ENCODE measurements at regions of chr3 and their contacts with region 1.

Region 1: DNA sequence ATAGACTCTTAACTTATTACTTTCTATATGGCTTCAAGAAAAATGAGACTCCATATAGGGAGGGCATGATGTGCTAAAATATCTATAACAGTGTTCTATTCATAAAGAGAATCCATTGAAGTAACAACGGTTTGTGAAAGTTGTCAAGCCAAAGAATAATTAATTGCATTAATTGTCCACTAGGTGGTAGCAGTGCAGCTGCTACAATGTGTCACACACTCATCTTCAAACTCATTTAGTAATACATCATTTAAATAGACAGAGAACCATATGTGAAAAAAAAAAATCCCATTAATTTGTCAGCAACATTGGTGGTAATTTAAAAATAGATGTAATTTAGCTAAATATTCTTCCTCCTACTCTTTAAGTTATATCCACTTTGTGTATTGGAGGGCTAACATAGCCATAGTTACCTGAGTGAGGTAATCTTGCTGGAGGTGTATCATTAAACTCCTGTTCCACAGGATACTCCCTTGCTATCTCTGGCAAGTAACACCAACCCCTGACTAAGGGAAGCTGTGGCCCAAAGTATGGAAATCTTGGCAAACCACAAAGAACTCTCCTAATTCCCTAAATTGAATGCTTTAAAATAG is 3.7 kb upstream of the CPA3 start:
- DNase-seq: no peak
- ATAC-seq: peak; percentile 55
- H3K4me3 Mint-ChIP-seq: no peak overlapping the region
- H3K27ac Mint-ChIP-seq: no peak overlapping the region
- H3K4me1 Mint-ChIP-seq: no peaks in the 10 kb centered on the region
- H3K27me3 Mint-ChIP-seq: peaks cover 12% of the 10 kb centered on the region
- CTCF ChIP-seq: peak; percentile 83

Region 2: GRCh38 chr3:148739720-148740119 is 121.7 kb before region 1 on chr3:
- CTCF ChIA-PET with region 1: no interaction called
- POLR2A ChIA-PET with region 1: no interaction called
- intact Hi-C with region 1: no loop called
- DNase-seq: no peak
- ATAC-seq: no peak
- H3K4me3 Mint-ChIP-seq: no peak overlapping the region
- H3K27ac Mint-ChIP-seq: no peak overlapping the region
- H3K4me1 Mint-ChIP-seq: no peaks in the 10 kb centered on the region
- H3K27me3 Mint-ChIP-seq: no peaks in the 10 kb centered on the region
- CTCF ChIP-seq: no peak

Region 3: DNA sequence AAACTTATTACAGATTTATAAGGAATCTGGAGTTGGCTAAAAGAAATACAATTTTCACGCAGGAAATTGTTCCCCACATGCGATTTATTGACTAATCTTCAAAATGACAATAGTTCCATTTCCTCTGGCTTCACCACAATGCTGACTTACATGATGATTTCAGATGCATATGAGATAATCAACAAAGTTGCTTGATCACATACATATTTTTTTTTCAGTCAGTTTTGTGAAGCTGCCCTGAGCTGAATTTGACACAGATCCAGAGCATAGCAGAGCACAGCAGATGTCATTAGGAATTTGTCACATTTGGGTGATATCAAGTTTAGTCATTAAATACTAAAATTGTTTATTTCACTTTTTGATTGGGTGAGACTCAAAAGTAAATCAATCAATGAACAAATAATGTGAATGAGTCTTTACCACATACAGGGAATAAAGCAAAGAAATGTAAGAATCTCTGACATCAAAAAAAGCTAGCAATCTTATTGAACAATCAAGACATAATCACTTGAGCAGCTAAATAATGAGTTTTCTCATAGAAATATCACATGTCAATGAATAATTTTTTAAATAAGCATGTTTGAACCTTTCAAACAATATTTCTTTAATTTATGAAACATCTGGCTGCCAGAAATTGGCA is 15.5 kb before region 1 on chr3:
- CTCF ChIA-PET with region 1: interaction called, 25 read pairs
- POLR2A ChIA-PET with region 1: no interaction called
- intact Hi-C with region 1: no loop called
- DNase-seq: no peak
- ATAC-seq: no peak
- H3K4me3 Mint-ChIP-seq: no peak overlapping the region
- H3K27ac Mint-ChIP-seq: no peak overlapping the region
- H3K4me1 Mint-ChIP-seq: no peaks in the 10 kb centered on the region
- H3K27me3 Mint-ChIP-seq: peaks cover 2% of the 10 kb centered on the region
- CTCF ChIP-seq: no peak

Region 4: GRCh38 chr3:148879256-148879655 is 17.9 kb after region 1 on chr3:
- CTCF ChIA-PET with region 1: interaction called, 17 read pairs
- POLR2A ChIA-PET with region 1: no interaction called
- intact Hi-C with region 1: no loop called
- DNase-seq: no peak
- ATAC-seq: no peak
- H3K4me3 Mint-ChIP-seq: no peak overlapping the region
- H3K27ac Mint-ChIP-seq: no peak overlapping the region
- H3K4me1 Mint-ChIP-seq: no peaks in the 10 kb centered on the region
- H3K27me3 Mint-ChIP-seq: peaks cover 1% of the 10 kb centered on the region
- CTCF ChIP-seq: no peak

Region 5: GRCh38 chr3:148902031-148902791 is 40.8 kb after region 1 on chr3:
- CTCF ChIA-PET with region 1: no interaction called
- POLR2A ChIA-PET with region 1: no interaction called
- intact Hi-C with region 1: no loop called
- DNase-seq: no peak
- ATAC-seq: no peak
- H3K4me3 Mint-ChIP-seq: no peak overlapping the region
- H3K27ac Mint-ChIP-seq: no peak overlapping the region
- H3K4me1 Mint-ChIP-seq: no peaks in the 10 kb centered on the region
- H3K27me3 Mint-ChIP-seq: peaks cover 16% of the 10 kb centered on the region
- CTCF ChIP-seq: no peak

Region 6: GRCh38 chr3:148943506-148944205 is 82.3 kb after region 1 on chr3:
- CTCF ChIA-PET with region 1: interaction called, 81 read pairs
- POLR2A ChIA-PET with region 1: no interaction called
- intact Hi-C with region 1: loop called (anchors 1 kb)
- DNase-seq: peak; percentile 30
- ATAC-seq: peak; percentile 96
- H3K4me3 Mint-ChIP-seq: no peak overlapping the region
- H3K27ac Mint-ChIP-seq: no peak overlapping the region
- H3K4me1 Mint-ChIP-seq: no peaks in the 10 kb centered on the region
- H3K27me3 Mint-ChIP-seq: no peaks in the 10 kb centered on the region
- CTCF ChIP-seq: peak; percentile 74